Ovary (tissue), 10 donors: ENCODE measurements at regions of chr4 and their contacts with region 1.

Region 1: DNA sequence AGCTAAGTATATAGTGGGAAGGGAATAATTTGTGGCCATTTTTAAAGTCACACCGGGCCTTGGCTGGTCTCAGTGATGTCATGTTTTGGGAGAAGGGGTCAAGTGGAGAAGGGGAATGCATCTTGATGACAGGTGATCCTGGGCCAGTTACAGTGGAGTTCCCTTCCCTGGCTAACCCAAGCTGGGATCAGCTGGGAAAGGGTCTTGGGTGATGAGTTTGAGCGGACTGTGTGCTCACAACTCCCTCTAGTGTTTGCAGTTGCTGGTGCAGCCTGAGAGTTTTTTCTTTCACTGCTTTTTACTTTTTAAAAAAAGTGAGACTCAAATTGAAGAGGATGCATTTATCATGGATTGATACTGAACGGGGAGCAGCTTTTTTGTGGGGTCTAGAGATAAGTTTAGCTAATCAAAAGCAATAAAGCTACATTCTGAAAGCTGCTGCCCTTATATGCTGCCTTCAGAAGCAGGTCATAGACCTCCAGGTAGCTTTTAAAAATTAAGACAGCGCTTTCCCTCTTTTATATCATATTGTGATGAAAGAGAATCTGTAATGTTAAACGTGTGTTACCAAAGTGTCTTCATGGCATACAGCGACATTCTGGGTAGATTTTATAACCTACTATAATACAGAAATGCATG is 164.7 kb downstream of the DCLK2 start:
- DNase-seq: peak in 3 of 5 donors; percentile 31 to 45 (median 37)
- H3K4me3 ChIP-seq: no peak overlapping the region
- H3K27ac ChIP-seq: no peak overlapping the region
- H3K4me1 ChIP-seq: no peaks in the 10 kb centered on the region
- H3K27me3 ChIP-seq: no peaks in the 10 kb centered on the region
- CTCF ChIP-seq: peak; percentile 58 to 69 (median 62)
- EP300 ChIP-seq: no peak
- POLR2A ChIP-seq: no peak

Region 2: DNA sequence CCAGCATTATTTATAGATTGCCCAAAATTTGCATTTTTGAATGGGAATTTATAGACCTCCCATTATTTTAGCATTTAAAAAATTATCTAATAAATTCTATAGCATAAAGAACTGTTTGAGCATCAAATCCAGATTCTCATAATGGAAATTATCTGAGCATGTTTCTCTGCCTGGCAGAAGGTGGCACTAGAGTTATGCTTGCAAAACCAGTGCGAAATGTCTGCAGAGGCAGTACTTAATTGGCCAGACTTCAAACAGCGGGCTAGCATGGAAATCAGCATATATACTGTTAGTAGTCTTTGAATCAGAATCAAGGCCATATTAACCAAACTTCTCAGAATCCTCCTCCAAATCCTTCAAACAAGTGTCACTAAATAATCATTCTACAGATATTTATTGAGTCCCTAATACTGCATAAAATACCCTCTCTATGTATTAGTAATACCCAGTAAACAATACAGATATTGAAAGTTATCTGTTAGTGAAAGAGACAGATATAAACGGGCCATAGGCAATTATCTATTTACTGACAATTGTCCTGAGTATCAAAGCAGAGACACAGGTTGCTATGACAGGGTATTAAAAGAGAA is 243.4 kb before region 1 on chr4:
- intact Hi-C with region 1: loop called in 2 of 4 experiments (anchors 10 kb)
- DNase-seq: peak in 2 of 5 donors; percentile 23
- H3K4me3 ChIP-seq: no peak overlapping the region
- H3K27ac ChIP-seq: no peak overlapping the region
- H3K4me1 ChIP-seq: peaks cover 4% of the 10 kb centered on the region
- H3K27me3 ChIP-seq: no peaks in the 10 kb centered on the region
- CTCF ChIP-seq: peak; percentile 18 to 35 (median 30)
- EP300 ChIP-seq: no peak
- POLR2A ChIP-seq: no peak

Region 3: DNA sequence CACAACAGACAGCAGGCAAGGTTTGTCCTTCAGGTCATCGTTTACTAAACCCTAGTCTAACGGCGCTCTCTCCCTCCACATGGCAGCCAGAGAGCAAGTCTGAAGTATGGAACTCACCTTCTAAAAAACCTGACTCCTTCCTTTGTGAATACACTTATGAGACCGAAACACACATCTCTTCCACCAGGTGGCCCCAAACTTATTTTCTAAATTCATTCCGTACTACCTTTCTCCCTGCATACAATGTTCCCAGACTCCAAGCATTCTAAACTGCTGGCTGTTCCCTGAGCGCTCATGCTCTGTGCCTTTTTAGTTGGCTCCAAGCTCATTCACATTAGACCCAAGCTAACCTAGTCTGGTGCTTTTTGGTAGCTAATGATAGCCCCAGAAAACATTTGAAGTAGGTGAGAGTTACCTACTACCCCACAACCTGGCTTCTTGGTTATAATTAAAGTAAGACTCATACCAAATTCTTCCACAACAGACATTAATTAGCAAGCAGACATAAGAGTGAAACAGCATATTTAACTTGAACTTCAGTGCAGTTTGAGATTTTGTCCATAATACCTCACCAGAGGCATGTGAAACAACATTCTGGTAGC is 232.3 kb before region 1 on chr4:
- intact Hi-C with region 1: loop called in 3 of 4 experiments (anchors 5 to 10 kb)
- DNase-seq: peak; percentile 15 to 49 (median 30)
- H3K4me3 ChIP-seq: no peak overlapping the region
- H3K27ac ChIP-seq: no peak overlapping the region
- H3K4me1 ChIP-seq: peaks cover 5% of the 10 kb centered on the region
- H3K27me3 ChIP-seq: no peaks in the 10 kb centered on the region
- CTCF ChIP-seq: peak in 2 of 3 donors; percentile 40 to 42
- EP300 ChIP-seq: no peak
- POLR2A ChIP-seq: no peak